Naive thymus-derived CD4-positive, alpha-beta T cell (primary cell): ENCODE measurements at regions of chr18 and their contacts with region 1.

Region 1: DNA sequence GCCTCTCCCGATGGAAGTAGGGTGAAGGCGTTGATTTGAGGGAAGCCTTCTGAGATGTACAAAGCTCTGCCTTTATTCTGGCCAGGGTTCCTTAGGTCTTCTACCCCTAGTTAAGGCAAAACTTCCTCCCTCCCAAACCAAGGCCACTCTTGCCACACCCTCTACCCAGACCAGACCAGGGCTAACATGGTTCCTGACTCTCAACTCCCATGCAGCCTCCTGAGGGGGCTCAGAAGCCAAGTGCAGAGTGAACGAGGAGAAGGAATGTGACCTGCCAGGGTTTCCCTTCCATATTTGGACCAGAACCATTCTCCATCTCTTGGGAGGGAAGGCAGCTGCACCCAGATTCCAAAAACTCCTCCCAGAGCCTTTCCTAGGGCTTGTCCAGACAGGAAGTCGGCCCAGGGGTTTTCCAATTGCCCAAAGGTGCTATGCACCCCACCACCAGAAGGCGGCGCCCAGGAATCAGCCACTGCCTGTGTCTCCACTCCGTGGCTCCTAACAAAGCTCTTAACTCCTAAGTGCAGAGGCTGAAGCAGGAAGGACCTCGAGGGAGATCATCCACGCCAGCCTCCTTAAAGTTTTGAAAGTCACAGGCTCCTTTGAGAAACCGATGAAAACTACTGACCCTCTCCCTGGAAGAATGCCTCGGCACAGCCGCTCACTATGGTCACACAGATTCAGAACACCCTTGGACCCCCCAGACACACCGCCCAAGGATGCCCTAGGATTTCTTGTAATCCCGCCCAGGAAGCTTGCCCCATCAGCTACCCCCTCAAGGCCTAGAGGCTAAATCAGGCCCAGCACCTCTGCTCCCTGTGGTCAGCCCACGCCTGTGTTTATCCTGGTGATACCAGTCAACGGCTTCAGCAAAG is 157.8 kb downstream of the SMAD2 start:
- DNase-seq: peak in 7 of 9 donors; percentile 41 to 77 (median 50)
- ATAC-seq: peak; percentile 69
- H3K4me3 ChIP-seq: no peak overlapping the region
- H3K4me3 Mint-ChIP-seq: peak overlapping the region in 1 of 10 donors; percentile 4
- H3K27ac ChIP-seq: no peak overlapping the region
- H3K27ac Mint-ChIP-seq: no peak overlapping the region
- H3K4me1 ChIP-seq: no peaks in the 10 kb centered on the region
- H3K4me1 Mint-ChIP-seq: peaks cover 0 to 3% (median 0%) of the 10 kb centered on the region in 7 donors
- H3K27me3 ChIP-seq: no peaks in the 10 kb centered on the region
- H3K27me3 Mint-ChIP-seq: peaks cover 0 to 6% (median 4%) of the 10 kb centered on the region in 5 donors

Region 2: DNA sequence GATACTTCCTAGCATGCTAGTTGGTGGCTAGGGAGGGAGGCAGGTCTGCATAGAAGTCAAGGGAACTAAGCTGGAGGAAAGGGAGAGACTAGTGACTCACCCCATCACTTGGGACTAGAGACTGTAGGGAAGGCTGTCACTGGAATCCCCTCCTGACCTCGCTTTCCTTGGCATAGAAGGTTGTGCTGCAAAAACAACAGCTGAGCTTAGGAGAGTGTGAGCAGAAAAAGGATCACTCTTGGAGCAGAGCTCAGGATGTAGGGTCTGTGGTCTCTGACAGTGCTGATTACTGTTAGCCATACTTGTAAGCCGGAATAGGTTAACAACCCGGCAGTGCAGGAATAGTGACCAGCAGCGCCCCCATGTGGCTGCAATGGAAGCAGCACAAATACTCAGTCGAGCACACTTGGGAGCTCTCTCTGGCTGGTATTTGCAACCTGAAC is 224.7 kb after region 1 on chr18:
- CTCF ChIA-PET with region 1: interaction called, 3 read pairs
- POLR2A ChIA-PET with region 1: no interaction called
- intact Hi-C with region 1: loop called in 1 of 2 experiments (anchors 1 kb)
- DNase-seq: peak in 3 of 9 donors; percentile 11 to 42 (median 16)
- ATAC-seq: no peak
- H3K4me3 ChIP-seq: no peak overlapping the region
- H3K4me3 Mint-ChIP-seq: no peak overlapping the region
- H3K27ac ChIP-seq: no peak overlapping the region
- H3K27ac Mint-ChIP-seq: no peak overlapping the region
- H3K4me1 ChIP-seq: no peaks in the 10 kb centered on the region
- H3K4me1 Mint-ChIP-seq: peaks cover 0 to 3% (median 0%) of the 10 kb centered on the region in 7 donors
- H3K27me3 ChIP-seq: no peaks in the 10 kb centered on the region
- H3K27me3 Mint-ChIP-seq: no peaks in the 10 kb centered on the region

Region 3: GRCh38 chr18:48022531-48023329 is 250.1 kb after region 1 on chr18:
- CTCF ChIA-PET with region 1: interaction called, 4 read pairs
- POLR2A ChIA-PET with region 1: no interaction called
- intact Hi-C with region 1: loop called in 1 of 2 experiments (anchors 1 kb)
- DNase-seq: peak in 7 of 9 donors; percentile 10 to 56 (median 39)
- ATAC-seq: peak; percentile 74
- H3K4me3 ChIP-seq: no peak overlapping the region
- H3K4me3 Mint-ChIP-seq: no peak overlapping the region
- H3K27ac ChIP-seq: no peak overlapping the region
- H3K27ac Mint-ChIP-seq: no peak overlapping the region
- H3K4me1 ChIP-seq: no peaks in the 10 kb centered on the region
- H3K4me1 Mint-ChIP-seq: peaks cover 0 to 8% (median 0%) of the 10 kb centered on the region in 7 donors
- H3K27me3 ChIP-seq: no peaks in the 10 kb centered on the region
- H3K27me3 Mint-ChIP-seq: peaks cover 24 to 55% (median 31%) of the 10 kb centered on the region in 5 donors